ENCODE measurements at regions of chr2 and their contacts with region 1.

Region 1: GRCh38 chr2:232521959-232522622 is 1.9 kb downstream of the PRSS56 start:
- DNase-seq: peak; percentile 90
- H3K4me3 ChIP-seq: peak overlapping the region; percentile 4 to 68 (median 32)
- H3K27ac ChIP-seq: no peak overlapping the region
- H3K4me1 ChIP-seq: peaks cover 10 to 37% (median 32%) of the 10 kb centered on the region in 6 donors
- H3K27me3 ChIP-seq: peaks cover 12 to 96% (median 56%) of the 10 kb centered on the region in 7 donors
- CTCF ChIP-seq: peak in 10 of 11 experiments; percentile 36 to 96 (median 92)
- POLR2A ChIP-seq: no peak

Region 2: DNA sequence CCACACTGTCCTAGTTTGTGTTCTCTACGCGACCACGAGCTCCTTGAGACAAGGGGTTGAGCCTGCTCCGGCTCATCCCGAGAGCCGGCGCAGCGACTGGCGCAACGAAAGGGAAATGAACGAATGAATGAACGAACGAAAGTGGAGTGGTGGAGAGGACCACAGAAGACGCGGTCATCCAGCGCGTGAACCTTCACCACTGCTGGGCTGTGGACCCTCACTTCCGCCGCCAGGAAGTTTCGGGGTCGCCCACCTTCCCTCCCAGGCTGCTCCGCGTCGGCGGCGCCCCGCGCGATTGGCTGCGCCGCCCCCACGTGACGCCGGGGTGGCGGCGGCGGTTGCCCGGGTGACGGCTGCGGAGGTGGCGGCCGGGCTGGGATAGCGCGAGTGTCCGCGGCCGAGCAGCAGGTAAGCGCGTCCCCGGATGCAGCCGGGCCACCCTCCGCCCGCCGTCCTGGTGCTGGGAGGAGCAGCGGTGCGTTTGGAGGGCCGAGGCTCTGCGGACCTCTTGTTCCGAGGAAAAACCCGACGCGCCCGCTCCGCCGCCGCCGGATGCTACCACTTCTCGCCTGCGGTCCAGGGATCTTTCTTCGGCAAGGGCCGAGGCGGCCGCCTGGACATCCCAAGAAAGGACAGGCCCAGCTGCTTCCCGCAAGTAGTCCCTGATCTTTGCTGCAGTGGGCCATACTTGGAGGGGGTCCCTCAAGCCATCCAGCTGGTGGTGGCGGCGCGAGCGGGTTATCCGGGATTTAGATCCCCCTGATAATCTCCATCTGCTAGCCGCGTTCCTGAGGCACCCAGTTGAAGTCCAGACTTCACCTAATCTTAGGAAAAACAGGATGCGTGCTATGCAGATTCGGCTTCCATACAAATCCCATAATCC is 1323.6 kb before region 1 on chr2 and contains the start of gene ARMC9:
- intact Hi-C with region 1: no loop called
- DNase-seq: peak; percentile 93
- H3K4me3 ChIP-seq: peak within 1 kb of the TSS; percentile 77 to 99 (median 95)
- H3K27ac ChIP-seq: peak within 1 kb of the TSS in 7 of 8 donors; percentile 36 to 75 (median 65)
- H3K4me1 ChIP-seq: peaks cover 0 to 24% (median 18%) of the 10 kb centered on the region in 6 donors
- H3K27me3 ChIP-seq: no peaks in the 10 kb centered on the region
- CTCF ChIP-seq: no peak
- POLR2A ChIP-seq: no peak
- total RNA-seq, gene ARMC9: 2.9 to 8.9 (median 4.9) TPM

Region 3: GRCh38 chr2:232455426-232456255 is 66.5 kb before region 1 on chr2 and contains the start of gene ALPI:
- intact Hi-C with region 1: loop called (anchors 10 kb)
- DNase-seq: peak; percentile 65
- H3K4me3 ChIP-seq: no peak within 1 kb of the TSS
- H3K27ac ChIP-seq: no peak within 1 kb of the TSS
- H3K4me1 ChIP-seq: no peaks in the 10 kb centered on the region
- H3K27me3 ChIP-seq: peaks cover 0 to 46% (median 14%) of the 10 kb centered on the region in 7 donors
- CTCF ChIP-seq: no peak
- POLR2A ChIP-seq: no peak
- total RNA-seq, gene ALPI: not detected

Region 4: GRCh38 chr2:233189025-233189424 is 666.9 kb after region 1 on chr2:
- intact Hi-C with region 1: no loop called
- DNase-seq: no peak
- H3K4me3 ChIP-seq: no peak overlapping the region
- H3K27ac ChIP-seq: peak overlapping the region in 1 of 8 donors; percentile 36
- H3K4me1 ChIP-seq: peaks cover 0 to 40% (median 15%) of the 10 kb centered on the region in 6 donors
- H3K27me3 ChIP-seq: no peaks in the 10 kb centered on the region
- CTCF ChIP-seq: no peak
- POLR2A ChIP-seq: no peak